ENCODE measurements at regions of chr2 and their contacts with region 1.

Region 1: GRCh38 chr2:64052468-64053241 is 33.4 kb upstream of the VPS54 start:
- DNase-seq: no peak
- CTCF ChIP-seq: no peak

Region 2: GRCh38 chr2:63320669-63321068 is 732.0 kb before region 1 on chr2:
- CTCF ChIA-PET with region 1: no interaction called
- POLR2A ChIA-PET with region 1: no interaction called
- DNase-seq: no peak
- CTCF ChIP-seq: no peak

Region 3: GRCh38 chr2:63926800-63927199 is 125.9 kb before region 1 on chr2:
- CTCF ChIA-PET with region 1: no interaction called
- POLR2A ChIA-PET with region 1: no interaction called
- DNase-seq: no peak
- CTCF ChIP-seq: no peak

Region 4: DNA sequence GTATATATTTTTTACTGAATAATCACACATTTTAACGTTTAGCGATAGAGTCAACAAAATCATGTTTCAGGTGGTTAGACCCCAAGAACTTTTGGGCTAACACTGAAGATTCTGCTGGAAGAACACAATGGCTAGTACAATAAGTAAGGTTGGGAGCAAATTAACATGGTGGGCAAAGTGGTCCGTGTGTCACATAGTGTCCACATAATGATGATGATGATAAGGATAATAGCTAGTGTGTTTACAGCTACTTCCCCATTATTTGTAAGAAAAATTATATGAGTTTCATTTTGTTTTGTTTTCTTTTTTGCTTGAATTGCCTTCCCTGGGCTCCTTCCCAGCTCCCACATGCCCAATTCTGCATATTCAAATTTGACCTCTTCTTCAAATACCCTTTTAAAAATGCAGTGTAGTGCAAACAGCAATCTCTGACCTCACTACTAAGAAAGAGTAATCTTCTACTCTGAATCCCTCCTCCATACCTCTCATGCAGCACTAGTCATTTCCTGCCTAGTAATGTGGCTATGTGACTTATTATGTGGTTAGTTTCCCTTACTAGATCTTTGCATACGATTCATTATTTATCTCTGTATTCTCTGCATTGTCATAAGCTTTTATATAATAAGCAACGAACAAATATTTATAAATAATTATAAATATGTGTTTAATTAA is 16.5 kb before region 1 on chr2:
- CTCF ChIA-PET with region 1: interaction called, 12 read pairs
- POLR2A ChIA-PET with region 1: no interaction called
- DNase-seq: peak; percentile 64
- CTCF ChIP-seq: no peak

Region 5: GRCh38 chr2:64062829-64063228 is 10.2 kb after region 1 on chr2:
- CTCF ChIA-PET with region 1: interaction called, 24 read pairs
- POLR2A ChIA-PET with region 1: no interaction called
- DNase-seq: no peak
- CTCF ChIP-seq: no peak

Region 6: DNA sequence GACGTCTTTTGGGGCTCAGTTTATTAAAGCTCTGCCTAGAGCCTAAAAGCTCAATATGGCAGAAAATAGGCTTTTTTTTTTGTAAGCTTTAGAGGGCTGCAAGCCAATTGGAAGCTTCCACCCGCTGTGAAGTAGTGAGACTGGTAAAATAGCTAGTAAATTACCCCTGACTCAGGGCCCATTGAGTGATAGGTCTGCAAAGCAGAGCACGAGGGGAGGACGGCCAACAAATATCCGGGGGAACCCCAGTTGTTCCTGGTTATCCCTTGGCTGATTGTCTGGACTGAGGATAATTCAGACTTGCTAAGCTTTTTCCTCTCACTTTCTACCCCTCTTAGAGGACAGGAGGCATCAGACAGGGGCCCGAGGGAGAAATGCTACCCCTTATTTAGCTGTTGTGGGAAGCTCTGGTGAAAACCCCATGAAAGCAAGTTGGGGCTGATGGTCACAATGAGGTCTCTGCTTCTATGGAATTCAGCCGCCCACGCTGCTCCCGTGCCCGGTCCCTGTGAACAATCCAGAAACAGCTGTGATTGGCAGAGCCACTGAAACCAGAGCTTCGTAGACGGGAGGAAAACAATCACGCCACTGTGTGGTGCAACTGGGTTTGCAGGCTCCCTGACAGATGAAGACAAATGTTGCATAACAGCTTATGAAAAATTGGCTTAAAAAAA is 259.4 kb after region 1 on chr2:
- CTCF ChIA-PET with region 1: interaction called, 10 read pairs
- POLR2A ChIA-PET with region 1: no interaction called
- DNase-seq: no peak
- CTCF ChIP-seq: no peak

Region 7: GRCh38 chr2:64318476-64318748 is 265.8 kb after region 1 on chr2:
- CTCF ChIA-PET with region 1: interaction called, 13 read pairs
- POLR2A ChIA-PET with region 1: no interaction called
- DNase-seq: no peak
- CTCF ChIP-seq: no peak